Right ventricle myocardium inferior (tissue), 1 donor: ENCODE measurements at regions of chr3 and their contacts with region 1.

Region 1: GRCh38 chr3:194782698-194783404 is 97.2 kb downstream of the FAM43A start:
- DNase-seq: no peak
- ATAC-seq: no peak

Region 2: DNA sequence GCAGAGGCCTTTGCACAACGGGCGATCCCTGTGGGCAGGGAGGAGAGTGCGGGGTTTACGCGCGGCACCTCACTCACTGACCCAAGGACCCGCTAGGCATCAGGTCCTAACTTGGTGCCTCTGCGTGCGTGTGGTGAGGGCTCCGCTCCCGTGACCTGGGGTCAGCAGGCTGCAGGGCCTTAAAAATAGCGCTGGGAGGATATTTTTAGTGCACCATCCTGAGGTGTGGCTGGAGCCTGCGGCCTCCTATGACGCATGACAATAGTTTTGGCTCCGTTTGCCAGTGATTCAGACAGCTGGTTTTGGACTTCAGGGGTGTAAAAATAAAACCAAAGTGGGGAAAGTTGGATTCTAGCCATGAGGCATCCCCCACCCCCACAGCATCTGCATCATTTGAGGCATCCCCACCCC is 41.9 kb after region 1 on chr3:
- intact Hi-C with region 1: loop called (anchors 5 kb)
- DNase-seq: no peak
- ATAC-seq: peak; percentile 92

Region 3: DNA sequence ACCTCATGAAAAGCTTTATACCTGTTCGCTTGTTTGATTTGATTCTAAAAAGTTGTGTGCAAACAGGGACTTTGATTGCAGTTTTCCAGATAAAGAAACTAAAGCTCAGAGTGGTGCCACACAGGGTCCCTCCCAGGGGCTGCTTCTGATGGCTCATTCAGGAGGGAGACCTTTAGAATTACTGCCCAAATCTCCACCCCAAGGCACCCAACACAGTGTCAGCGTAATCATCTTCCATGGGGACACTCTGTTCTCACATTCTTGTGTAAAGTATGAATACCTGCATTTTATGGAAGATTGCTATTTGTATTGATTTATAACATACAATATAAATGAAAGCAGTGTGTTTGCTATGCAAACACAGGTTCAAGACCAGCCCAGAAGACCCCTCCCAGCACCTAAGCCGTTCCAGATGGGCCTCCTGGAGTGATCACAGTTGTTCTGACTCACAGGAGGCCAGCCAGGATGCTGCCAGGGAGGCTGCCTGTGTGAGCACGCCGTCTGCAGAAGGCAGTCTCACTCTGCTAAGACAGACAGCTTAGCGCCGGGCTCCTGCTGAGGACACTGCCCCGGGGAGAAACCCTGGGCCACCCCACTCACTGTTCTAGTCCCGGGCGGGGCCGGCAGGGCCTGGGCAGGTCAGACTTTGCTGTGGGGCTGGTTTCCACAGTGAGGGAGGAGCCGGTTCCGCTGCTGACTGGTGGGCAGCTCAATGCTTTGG is 88.5 kb after region 1 on chr3:
- intact Hi-C with region 1: loop called (anchors 5 kb)
- DNase-seq: peak; percentile 81
- ATAC-seq: peak; percentile 72

Region 4: GRCh38 chr3:194930377-194931204 is 147.7 kb after region 1 on chr3:
- intact Hi-C with region 1: no loop called
- DNase-seq: no peak
- ATAC-seq: peak; percentile 78

Region 5: GRCh38 chr3:194952841-194953241 is 170.0 kb after region 1 on chr3:
- intact Hi-C with region 1: loop called (anchors 5 kb)
- DNase-seq: no peak
- ATAC-seq: peak; percentile 36

Region 6: GRCh38 chr3:195259475-195260279 is 476.8 kb after region 1 on chr3:
- intact Hi-C with region 1: loop called (anchors 10 kb)
- DNase-seq: peak; percentile 94
- ATAC-seq: peak; percentile 89